ENCODE measurements at regions of chr5 and their contacts with region 1.

Region 1: DNA sequence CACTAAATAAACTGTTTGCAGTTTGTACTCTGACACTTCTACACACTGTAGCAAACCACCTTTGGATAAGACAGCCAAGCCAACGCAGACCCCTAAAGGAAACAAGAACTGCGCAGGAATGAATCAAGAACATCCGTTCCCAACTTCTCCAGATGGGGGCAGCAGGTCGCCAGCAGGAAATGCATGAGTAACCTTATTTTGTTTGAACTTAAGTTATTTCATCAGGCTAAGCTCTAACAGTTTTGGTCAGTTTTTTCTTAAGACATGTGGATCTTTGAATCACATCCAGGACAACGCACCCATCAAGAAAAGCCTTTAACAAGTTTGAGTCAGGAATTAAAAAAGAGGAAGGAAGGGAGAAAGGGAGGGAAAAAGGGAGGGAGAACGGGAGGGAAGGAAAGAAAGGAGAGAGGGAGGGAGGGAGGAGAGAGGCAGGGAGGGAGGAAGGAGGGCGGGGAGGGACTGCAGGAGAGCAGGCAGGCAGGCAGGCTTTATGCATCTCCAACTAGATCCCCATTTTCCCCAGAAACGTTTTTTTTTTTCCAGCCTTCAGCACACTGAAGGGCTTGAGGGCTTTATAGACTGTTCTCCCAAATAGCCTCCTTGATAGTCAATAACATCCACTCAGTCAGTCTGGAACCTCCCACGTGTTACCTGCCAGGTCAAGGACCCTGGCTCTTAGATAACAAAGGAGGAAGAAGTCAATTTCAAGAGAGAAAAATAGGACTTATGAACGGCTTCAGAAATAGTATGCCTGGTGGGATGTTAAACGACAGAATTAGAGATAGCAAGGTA is 22.2 kb downstream of the BHMT start:
- DNase-seq: peak; percentile 61
- CTCF ChIP-seq: peak; percentile 78

Region 2: DNA sequence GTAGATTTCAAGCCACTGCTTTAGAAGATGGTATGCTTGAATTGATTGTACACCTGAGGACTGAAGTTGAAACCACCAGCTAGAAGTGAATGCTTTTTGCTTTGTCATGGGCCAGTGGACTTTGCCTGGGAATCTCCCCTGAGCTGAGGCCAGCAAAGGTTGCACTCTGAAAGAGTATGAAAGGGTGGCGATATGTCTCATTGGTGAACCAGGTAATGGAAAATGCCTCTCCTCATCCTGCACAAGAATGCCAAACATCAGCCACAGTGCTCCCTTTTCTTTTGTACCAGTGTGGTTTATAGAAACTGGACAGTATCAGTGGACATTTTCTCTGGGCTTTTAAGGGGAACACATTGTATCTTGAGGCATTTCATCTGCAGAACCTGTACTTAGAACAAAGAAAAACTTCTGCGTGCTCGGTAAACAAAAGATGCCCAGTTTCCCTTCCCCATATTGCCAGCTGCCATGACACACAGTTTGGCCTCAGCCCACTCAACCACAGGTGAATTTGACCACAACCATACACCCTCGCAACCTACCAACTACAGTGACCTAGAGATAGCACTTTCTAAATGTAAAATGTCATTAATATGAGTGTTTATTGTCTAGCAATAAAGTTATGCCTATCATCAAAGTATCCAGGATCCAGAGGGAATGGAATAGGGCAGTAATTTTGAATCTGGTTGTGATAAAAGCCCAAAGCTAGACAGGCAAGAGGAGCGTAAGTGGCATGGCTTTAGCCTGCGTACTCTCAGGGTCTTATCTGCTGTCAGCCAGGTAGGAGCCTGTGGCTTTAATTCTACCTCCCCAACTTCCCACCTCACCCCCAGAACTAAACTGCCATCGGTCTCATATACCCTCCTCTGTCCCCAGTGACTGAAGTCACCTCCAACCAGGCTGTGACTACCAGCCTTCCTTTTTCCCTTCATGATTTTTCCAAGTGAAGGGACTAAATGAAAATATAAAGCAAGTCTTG is 405.8 kb before region 1 on chr5:
- CTCF ChIA-PET with region 1: no interaction called
- POLR2A ChIA-PET with region 1: no interaction called
- DNase-seq: peak; percentile 70
- CTCF ChIP-seq: no peak

Region 3: GRCh38 chr5:79030663-79031484 is 103.0 kb before region 1 on chr5:
- CTCF ChIA-PET with region 1: interaction called, 198 read pairs
- POLR2A ChIA-PET with region 1: no interaction called
- DNase-seq: no peak
- CTCF ChIP-seq: no peak

Region 4: GRCh38 chr5:79107020-79107796 is 26.6 kb before region 1 on chr5:
- CTCF ChIA-PET with region 1: interaction called, 24 read pairs
- POLR2A ChIA-PET with region 1: no interaction called
- DNase-seq: no peak
- CTCF ChIP-seq: no peak

Region 5: DNA sequence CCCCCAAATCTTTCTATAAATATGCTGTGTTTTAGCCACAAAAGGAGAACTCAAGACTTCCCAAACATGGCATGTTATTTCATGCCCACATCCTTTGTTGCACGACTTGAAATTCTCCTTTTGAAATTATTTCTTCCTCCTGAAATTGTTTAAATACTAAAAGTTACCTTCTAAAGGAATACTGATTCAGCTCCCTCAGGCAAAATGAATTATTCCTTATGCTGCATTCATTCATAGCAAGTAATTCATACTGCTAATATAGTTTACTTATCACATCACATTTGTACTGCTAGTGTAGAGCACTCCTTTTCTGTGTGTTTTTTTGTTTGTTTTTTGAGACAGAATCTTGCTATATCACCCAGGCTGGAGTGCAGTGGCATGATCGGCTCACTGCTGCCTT is 23.5 kb after region 1 on chr5:
- CTCF ChIA-PET with region 1: interaction called, 29 read pairs
- POLR2A ChIA-PET with region 1: no interaction called
- DNase-seq: no peak
- CTCF ChIP-seq: no peak

Region 6: DNA sequence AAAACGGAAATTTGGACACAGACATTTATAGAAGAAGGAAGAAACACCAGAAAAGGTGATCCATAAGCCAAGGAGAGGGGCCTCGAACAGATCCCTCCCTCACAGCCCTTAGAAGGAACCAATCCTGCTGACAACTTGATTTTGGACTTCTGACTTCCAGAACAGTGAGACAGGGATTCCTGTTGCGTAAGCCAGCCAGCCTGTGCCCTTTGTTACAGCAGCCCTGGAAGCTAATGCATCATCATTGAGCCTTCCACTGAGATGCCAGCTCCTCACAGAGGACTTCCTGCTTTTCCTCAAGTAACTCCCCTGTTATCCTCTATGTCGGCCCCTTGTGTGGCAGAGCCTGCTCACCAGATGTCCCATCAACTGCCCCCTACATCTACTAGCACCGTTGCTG is 196.2 kb after region 1 on chr5:
- CTCF ChIA-PET with region 1: no interaction called
- POLR2A ChIA-PET with region 1: no interaction called
- DNase-seq: no peak
- CTCF ChIP-seq: no peak

Region 7: DNA sequence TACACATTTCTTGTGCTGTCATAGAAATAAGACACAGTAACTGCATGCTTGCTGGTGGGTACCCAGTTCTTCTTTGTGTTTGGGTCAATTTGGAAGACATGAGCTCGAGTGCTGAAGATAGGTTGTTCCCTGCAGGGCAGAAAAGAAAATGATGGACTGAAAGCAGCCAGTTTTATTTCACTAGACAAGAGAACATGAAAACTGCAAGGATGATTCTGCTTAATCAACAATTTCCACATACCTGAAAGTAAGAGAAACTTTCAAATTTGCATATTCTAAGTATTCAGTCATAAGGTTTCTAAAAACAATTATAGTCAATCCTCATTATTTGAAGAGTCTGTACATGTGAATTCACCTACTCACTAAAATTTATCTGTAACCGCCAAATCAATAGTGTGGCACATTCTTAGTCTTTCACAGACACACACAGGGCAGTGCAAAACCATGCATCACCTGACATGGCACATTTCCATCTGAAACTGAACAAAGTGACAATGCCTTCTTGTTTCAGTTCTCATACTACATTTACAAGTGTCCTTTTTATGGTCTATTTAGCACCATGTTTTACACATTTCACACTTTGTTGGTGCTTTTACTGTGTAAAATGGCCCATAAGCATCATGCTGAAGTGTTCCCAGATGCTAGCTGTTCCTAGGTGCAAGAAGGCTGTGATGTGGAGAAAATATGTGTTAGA is 323.2 kb after region 1 on chr5:
- CTCF ChIA-PET with region 1: interaction called, 178 read pairs
- POLR2A ChIA-PET with region 1: no interaction called
- DNase-seq: peak; percentile 9
- CTCF ChIP-seq: no peak

Region 8: DNA sequence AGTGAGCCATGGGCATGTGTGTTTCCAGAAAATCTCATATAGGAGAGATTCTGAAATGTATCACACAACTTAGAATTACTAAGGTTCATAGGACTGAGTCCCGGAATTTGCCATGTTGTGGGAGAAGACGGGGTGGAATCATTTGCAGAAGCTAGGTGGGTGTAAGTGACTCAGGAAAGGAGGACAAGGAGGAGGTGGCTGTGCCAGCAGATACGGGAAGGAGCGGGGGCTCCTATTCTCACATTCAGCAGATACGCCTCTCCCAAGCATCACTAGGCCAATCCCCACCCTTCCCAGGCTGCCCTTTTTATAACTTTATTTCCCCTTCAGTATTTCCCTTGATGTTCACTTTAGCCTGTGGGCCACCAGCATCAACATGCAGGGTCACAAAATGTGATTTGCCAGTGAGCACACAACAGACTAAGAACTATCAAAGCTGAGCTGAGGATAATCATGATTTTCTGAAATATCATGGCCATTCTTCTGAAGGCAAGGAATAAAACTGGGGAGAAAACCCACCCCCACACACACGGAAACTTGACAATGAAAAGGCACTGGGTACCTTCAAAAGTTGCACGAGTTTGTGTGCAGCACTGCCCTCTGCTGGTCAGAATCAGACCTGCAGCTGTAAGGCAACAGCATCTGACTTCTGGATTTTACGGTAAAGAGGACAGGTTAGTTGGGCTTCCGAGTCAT is 724.0 kb after region 1 on chr5:
- CTCF ChIA-PET with region 1: interaction called, 11 read pairs
- POLR2A ChIA-PET with region 1: no interaction called
- DNase-seq: peak; percentile 57
- CTCF ChIP-seq: peak; percentile 95